ENCODE measurements at regions of chr6 and their contacts with region 1.

Region 1: GRCh38 chr6:1604158-1605030 is 5.3 kb upstream of the FOXC1 start:
- DNase-seq: peak; percentile 94
- H3K4me3 ChIP-seq: peak overlapping the region in 7 of 8 donors; percentile 30 to 69 (median 48)
- H3K27ac ChIP-seq: no peak overlapping the region
- H3K4me1 ChIP-seq: peaks cover 19 to 62% (median 48%) of the 10 kb centered on the region in 6 donors
- H3K27me3 ChIP-seq: peaks cover 19 to 99% (median 87%) of the 10 kb centered on the region in 7 donors
- CTCF ChIP-seq: peak; percentile 44 to 99 (median 94)
- POLR2A ChIP-seq: no peak

Region 2: GRCh38 chr6:1498491-1499113 is 105.8 kb before region 1 on chr6:
- intact Hi-C with region 1: no loop called
- DNase-seq: no peak
- H3K4me3 ChIP-seq: no peak overlapping the region
- H3K27ac ChIP-seq: no peak overlapping the region
- H3K4me1 ChIP-seq: no peaks in the 10 kb centered on the region
- H3K27me3 ChIP-seq: peaks cover 0 to 5% (median 0%) of the 10 kb centered on the region in 7 donors
- CTCF ChIP-seq: no peak
- POLR2A ChIP-seq: no peak

Region 3: GRCh38 chr6:2081155-2082138 is 477.1 kb after region 1 on chr6:
- intact Hi-C with region 1: no loop called
- DNase-seq: no peak
- H3K4me3 ChIP-seq: no peak overlapping the region
- H3K27ac ChIP-seq: no peak overlapping the region
- H3K4me1 ChIP-seq: no peaks in the 10 kb centered on the region
- H3K27me3 ChIP-seq: no peaks in the 10 kb centered on the region
- CTCF ChIP-seq: no peak
- POLR2A ChIP-seq: no peak

Region 4: GRCh38 chr6:2103644-2104523 is 499.5 kb after region 1 on chr6:
- intact Hi-C with region 1: loop called (anchors 5 kb)
- DNase-seq: no peak
- H3K4me3 ChIP-seq: no peak overlapping the region
- H3K27ac ChIP-seq: no peak overlapping the region
- H3K4me1 ChIP-seq: peaks cover 0 to 13% (median 0%) of the 10 kb centered on the region in 6 donors
- H3K27me3 ChIP-seq: no peaks in the 10 kb centered on the region
- CTCF ChIP-seq: peak in 9 of 11 experiments; percentile 33 to 59 (median 50)
- POLR2A ChIP-seq: no peak

Region 5: DNA sequence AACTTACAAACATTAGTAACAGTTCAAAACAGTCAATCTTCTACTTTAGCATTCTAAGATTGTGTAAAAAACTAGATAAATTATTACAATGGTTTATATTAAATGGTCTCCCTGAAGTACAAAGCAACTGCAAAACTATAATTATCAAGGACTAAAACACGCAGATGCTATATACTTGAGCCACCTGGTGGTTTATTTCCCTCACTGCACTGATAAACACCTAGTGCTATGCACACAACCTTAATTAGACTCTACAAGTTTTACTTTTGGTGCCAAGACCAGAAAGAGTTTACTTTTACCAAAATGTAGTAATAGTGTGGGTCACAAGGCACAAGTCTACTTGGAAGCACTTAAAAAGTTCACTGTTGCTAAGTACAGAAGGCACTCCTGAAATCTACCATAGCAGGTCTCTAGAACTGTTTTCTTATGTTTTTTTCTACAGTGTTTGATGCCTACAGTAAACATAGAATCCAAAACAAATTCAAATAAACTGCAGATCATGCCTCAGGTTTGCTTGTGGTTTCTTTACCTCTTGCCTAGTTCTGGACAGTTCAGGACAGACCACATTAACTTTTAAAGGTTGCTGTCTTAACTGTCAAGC is 591.8 kb after region 1 on chr6:
- intact Hi-C with region 1: loop called (anchors 2 kb)
- DNase-seq: no peak
- H3K4me3 ChIP-seq: no peak overlapping the region
- H3K27ac ChIP-seq: no peak overlapping the region
- H3K4me1 ChIP-seq: peaks cover 0 to 18% (median 5%) of the 10 kb centered on the region in 6 donors
- H3K27me3 ChIP-seq: no peaks in the 10 kb centered on the region
- CTCF ChIP-seq: peak; percentile 55 to 86 (median 75)
- POLR2A ChIP-seq: no peak

Measured in spleen (tissue), 13 donors.